ENCODE measurements at regions of chr7 and their contacts with region 1.

Region 1: DNA sequence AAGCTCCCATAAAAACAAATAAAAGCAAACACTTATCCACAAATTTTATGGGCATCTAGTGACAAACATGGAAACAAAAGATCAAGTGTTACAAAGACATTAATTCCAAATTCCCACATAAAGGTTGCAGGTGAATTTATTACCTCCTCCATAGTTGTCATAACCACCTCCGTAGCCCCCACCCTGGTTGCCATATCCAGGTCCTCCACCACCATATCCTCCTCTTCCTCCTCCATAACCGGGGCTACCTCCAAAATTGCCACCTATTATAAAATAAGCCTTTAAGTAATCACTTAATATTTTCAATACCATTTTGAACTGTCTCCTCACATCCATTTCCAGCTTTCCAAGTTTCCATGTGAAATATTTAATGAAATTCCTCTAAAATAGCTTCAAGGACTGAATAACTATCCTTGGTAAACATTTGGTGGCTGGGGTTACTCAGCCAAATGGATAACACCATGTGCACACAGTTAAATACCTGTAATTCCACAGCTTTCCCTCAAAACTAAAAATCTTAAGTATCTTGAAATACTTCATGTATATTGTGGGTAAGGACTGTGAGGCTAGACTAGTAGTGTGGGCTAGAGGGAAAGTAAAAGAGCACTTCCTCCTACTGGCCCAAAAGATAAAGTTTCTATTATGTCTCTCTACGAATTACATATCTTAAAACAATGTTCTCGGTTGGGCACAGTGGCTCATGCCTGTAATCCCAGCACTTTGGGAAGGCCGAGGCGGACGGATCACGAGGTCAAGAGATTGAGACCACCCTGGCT is 6.9 kb downstream of the HNRNPA2B1 start:
- DNase-seq: peak; percentile 37
- ATAC-seq: no peak
- H3K4me3 ChIP-seq: no peak overlapping the region
- H3K4me3 Mint-ChIP-seq: peak overlapping the region; percentile 59
- H3K27ac ChIP-seq: peak overlapping the region in 1 of 2 donors; percentile 31
- H3K27ac Mint-ChIP-seq: peak overlapping the region; percentile 83
- H3K4me1 ChIP-seq: peaks cover 59 to 62% of the 10 kb centered on the region in 2 donors
- H3K4me1 Mint-ChIP-seq: peaks cover 84% of the 10 kb centered on the region
- H3K27me3 ChIP-seq: no peaks in the 10 kb centered on the region
- H3K27me3 Mint-ChIP-seq: no peaks in the 10 kb centered on the region
- CTCF ChIP-seq: no peak

Region 2: DNA sequence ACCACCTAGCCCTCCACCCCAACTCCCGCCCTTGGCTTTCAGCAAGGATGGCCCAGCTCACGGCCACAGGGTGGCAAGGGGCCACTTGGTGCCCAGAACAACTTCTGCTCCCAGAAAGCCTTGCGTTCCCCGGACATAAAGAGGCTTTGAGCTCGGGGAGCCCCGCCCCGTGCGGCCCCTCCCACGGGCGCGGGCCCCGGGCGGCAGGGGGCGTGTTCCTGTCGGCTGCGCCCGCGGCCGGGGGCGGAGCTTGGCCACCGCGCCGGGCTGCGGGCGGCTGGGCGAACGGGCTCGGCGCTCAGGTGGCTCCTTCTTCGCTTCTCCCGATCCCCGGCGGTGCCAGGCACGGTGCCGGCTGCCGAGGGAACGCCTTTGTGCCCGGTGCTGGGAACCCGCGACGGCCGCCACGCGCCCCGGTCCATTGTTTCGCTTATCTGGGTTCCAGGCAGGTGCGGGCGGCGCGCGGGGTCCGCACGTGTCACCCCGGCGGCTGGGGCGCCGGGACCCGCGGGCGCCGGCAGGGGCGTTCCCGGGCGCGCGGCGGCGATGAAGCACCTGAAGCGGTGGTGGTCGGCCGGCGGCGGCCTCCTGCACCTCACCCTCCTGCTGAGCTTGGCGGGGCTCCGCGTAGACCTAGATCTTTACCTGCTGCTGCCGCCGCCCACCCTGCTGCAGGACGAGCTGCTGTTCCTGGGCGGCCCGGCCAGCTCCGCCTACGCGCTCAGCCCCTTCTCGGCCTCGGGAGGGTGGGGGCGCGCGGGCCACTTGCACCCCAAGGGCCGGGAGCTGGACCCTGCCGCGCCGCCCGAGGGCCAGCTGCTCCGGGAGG is 41.5 kb before region 1 on chr7 and contains the start of gene NFE2L3:
- CTCF ChIA-PET with region 1: interaction called, 41 read pairs
- POLR2A ChIA-PET with region 1: interaction called, 7 read pairs
- intact Hi-C with region 1: loop called (anchors 2 kb)
- DNase-seq: peak; percentile 89
- ATAC-seq: peak; percentile 89
- H3K4me3 ChIP-seq: peak within 1 kb of the TSS; percentile 35 to 90 (median 62)
- H3K4me3 Mint-ChIP-seq: peak within 1 kb of the TSS; percentile 97
- H3K27ac ChIP-seq: peak within 1 kb of the TSS; percentile 16 to 65
- H3K27ac Mint-ChIP-seq: peak within 1 kb of the TSS; percentile 88
- H3K4me1 ChIP-seq: peaks cover 34 to 42% of the 10 kb centered on the region in 2 donors
- H3K4me1 Mint-ChIP-seq: peaks cover 48% of the 10 kb centered on the region
- H3K27me3 ChIP-seq: no peaks in the 10 kb centered on the region
- H3K27me3 Mint-ChIP-seq: no peaks in the 10 kb centered on the region
- CTCF ChIP-seq: no peak
- total RNA-seq, gene NFE2L3: 1.6 and 4.5 TPM in 2 replicates

Region 3: DNA sequence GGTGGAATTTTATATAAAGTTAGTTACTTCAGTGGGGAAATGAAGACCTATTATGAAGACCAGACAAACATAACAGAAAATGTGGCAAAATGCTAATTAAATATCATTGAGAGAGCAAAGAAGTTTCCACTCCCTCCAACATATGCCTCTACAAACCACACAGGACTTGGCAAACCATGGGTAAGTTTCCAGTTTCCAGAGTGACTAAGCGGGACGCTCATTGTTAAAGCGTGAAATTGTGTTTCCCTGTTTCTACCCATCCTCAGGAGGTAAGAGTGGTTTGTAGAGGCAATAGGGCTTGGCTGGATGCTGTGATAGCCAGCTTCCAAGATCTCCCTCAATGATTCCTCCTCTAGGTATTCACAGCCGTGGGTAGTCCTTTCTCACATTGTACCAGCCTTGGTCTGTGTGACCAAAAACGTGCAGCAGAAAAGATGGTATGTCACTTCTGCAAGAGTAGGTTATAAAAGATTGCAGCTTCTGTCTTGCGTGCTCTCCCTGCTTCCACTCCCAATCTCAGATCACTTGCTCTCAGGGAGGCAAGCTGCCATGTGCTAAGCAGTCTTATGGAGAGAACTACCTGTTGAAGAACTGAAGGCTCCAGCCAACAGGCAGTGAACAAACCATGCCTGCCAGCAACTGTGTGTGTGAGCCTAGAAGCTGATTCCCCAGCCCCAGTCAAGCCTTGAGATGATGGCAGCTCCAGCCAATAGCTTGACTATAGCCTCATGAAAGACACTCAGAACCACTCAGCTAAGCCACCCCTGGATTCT is 43.6 kb after region 1 on chr7:
- CTCF ChIA-PET with region 1: no interaction called
- POLR2A ChIA-PET with region 1: interaction called, 12 read pairs
- intact Hi-C with region 1: no loop called
- DNase-seq: no peak
- ATAC-seq: no peak
- H3K4me3 ChIP-seq: no peak overlapping the region
- H3K4me3 Mint-ChIP-seq: no peak overlapping the region
- H3K27ac ChIP-seq: no peak overlapping the region
- H3K27ac Mint-ChIP-seq: no peak overlapping the region
- H3K4me1 ChIP-seq: no peaks in the 10 kb centered on the region
- H3K4me1 Mint-ChIP-seq: no peaks in the 10 kb centered on the region
- H3K27me3 ChIP-seq: peaks cover 0 to 8% (median 0%) of the 10 kb centered on the region in 4 experiments
- H3K27me3 Mint-ChIP-seq: peaks cover 5% of the 10 kb centered on the region
- CTCF ChIP-seq: no peak

Region 4: GRCh38 chr7:26620352-26620751 is 426.7 kb after region 1 on chr7:
- CTCF ChIA-PET with region 1: no interaction called
- POLR2A ChIA-PET with region 1: no interaction called
- intact Hi-C with region 1: no loop called
- DNase-seq: no peak
- ATAC-seq: no peak
- H3K4me3 ChIP-seq: no peak overlapping the region
- H3K4me3 Mint-ChIP-seq: no peak overlapping the region
- H3K27ac ChIP-seq: no peak overlapping the region
- H3K27ac Mint-ChIP-seq: no peak overlapping the region
- H3K4me1 ChIP-seq: no peaks in the 10 kb centered on the region
- H3K4me1 Mint-ChIP-seq: no peaks in the 10 kb centered on the region
- H3K27me3 ChIP-seq: no peaks in the 10 kb centered on the region
- H3K27me3 Mint-ChIP-seq: no peaks in the 10 kb centered on the region
- CTCF ChIP-seq: no peak

Measured in B cell (primary cell).